Prostate gland (tissue), 2 donors: ENCODE measurements at regions of chr13 and their contacts with region 1.

Region 1: GRCh38 chr13:98576963-98577822 is at the start of gene STK24:
- DNase-seq: peak; percentile 65
- H3K4me3 ChIP-seq: peak within 1 kb of the TSS; percentile 92
- H3K27ac ChIP-seq: peak within 1 kb of the TSS; percentile 96 to 97
- H3K4me1 ChIP-seq: no peaks in the 10 kb centered on the region
- H3K27me3 ChIP-seq: no peaks in the 10 kb centered on the region
- CTCF ChIP-seq: no peak
- POLR2A ChIP-seq: peak; percentile 11
- total RNA-seq, gene STK24: 80.5 to 187 TPM

Region 2: DNA sequence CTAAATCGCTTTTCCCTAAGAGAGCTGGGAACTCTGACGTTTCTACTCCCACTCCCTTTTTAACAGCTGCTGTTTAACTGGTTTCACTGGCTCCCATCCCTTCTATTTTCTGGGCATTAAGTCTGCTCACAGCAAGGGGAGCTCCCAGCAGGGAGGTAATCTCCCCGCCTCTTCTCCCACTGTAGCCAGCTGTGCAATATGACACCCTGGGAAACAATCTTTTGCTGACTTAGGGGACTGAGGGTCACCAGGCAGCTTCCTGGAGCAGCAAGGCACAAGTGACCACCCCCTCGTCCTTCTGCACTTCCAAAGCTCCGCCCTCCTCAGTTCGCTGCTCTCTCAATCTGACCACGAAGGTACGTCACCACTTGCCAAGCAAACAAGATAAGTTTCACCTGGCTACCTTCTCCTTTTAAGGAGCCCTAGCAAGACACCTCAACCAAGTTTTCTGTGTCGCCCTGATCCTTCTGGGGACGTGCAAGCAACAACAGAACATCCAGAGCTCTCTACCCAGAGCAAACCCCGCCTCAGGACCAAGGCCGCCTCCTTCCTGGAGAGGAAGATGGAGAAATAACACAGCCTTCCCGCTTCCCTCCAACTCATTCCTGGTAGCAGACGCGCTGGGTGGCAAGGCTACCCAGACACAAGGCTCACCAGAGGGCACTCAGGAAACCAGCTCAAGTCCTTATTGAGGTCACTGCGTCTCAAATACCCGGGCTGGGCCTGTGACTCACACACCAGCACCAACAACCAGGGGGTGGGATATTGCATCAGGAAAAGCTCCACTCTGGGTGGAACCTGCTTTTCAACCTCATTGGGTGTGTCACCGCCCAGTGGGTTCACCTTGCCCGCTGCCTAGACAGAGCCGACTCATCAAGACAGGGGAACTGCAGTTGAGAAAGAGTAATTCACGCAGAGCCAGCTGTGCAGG is 92.6 kb before region 1 on chr13:
- intact Hi-C with region 1: loop called (anchors 5 kb)
- DNase-seq: peak; percentile 89
- H3K4me3 ChIP-seq: no peak overlapping the region
- H3K27ac ChIP-seq: peak overlapping the region; percentile 78 to 82
- H3K4me1 ChIP-seq: peaks cover 5% of the 10 kb centered on the region
- H3K27me3 ChIP-seq: no peaks in the 10 kb centered on the region
- CTCF ChIP-seq: peak in 1 of 4 experiments; percentile 17
- POLR2A ChIP-seq: no peak

Region 3: DNA sequence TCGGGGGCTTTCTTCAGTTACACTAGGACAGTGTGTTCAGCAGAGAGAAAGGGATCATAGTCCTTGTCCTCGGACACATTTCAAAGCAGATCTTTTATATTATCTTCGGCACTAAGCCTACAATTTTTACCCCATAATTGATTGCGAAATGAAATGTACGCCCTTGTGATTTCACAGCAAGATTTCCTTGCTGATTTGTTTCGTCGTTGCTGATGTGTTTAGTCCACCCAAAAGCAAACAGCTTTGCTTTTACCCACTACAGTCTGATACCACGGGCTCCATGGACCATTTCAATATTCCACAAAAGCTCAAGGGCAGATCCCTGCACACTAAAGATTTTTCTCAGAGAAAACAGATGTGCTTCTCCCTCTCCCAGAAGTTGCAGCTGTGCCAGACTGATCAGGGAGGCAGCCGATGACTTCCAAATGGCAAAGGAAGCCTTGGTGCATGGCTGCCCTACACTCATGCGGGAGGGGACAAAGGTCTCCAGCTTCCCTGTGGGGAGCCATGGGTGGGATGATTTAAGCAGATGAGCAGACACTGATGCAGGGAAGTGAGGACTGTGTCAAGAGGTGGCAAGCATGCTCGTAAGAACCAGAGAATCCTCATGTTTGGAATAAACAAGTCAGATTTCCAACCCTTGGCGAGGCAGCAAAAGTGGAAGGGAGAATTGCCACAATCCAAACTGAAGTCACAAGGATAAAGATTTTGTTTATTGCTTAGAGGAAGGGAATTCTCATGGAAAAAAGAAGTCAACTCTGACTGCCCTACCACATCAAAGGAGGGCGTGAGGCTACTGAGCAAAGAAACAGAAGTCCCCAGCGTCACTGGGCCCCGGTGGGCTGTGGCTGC is 81.3 kb before region 1 on chr13:
- intact Hi-C with region 1: loop called (anchors 5 kb)
- DNase-seq: no peak
- H3K4me3 ChIP-seq: no peak overlapping the region
- H3K27ac ChIP-seq: peak overlapping the region; percentile 70 to 75
- H3K4me1 ChIP-seq: peaks cover 15% of the 10 kb centered on the region
- H3K27me3 ChIP-seq: no peaks in the 10 kb centered on the region
- CTCF ChIP-seq: no peak
- POLR2A ChIP-seq: no peak

Region 4: DNA sequence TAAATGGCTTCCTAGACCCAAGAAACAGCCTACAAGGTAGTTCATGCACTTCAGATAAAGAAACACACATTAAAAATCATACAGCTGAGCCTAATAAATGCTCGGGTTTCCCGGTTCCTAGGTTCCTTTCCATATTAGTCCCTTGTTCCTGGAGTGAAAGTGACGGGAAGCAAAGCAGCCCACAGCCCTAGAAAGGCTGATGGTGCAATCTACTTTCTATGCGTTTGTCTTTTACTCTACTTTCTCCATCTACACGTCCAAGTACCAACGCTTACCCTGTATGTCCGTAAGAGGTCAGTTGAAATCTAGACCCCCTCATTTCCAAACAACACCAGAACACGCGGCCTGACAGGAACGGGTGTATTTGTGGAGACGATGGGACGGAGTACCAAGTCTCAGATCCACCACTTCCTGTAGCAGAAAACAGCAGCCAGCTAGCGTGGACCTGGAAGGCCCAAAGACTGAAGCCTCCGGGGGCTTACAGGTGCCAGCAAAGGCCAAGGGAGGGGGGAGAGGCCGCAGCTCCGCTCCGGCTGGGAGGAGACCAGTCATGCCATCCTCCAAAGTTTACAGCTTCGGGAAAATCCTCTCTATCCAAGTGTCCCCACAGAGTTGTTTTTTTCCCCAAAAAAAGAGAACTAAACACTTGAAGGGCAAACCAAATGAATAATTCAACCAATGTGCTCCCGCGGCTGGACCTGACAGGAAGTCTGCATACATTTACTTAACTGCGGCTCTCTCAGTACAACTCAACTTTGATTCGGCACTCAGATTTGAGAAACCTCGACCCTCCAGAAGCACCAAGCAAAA is 34.4 kb before region 1 on chr13:
- intact Hi-C with region 1: loop called (anchors 5 kb)
- DNase-seq: no peak
- H3K4me3 ChIP-seq: no peak overlapping the region
- H3K27ac ChIP-seq: peak overlapping the region; percentile 53
- H3K4me1 ChIP-seq: peaks cover 16% of the 10 kb centered on the region
- H3K27me3 ChIP-seq: no peaks in the 10 kb centered on the region
- CTCF ChIP-seq: no peak
- POLR2A ChIP-seq: no peak